Activated CD4-positive, alpha-beta T cell treated with anti-CD3 and anti-CD28 coated beads for 36 hours (primary cell): ENCODE measurements at regions of chr11 and their contacts with region 1.

Region 1: DNA sequence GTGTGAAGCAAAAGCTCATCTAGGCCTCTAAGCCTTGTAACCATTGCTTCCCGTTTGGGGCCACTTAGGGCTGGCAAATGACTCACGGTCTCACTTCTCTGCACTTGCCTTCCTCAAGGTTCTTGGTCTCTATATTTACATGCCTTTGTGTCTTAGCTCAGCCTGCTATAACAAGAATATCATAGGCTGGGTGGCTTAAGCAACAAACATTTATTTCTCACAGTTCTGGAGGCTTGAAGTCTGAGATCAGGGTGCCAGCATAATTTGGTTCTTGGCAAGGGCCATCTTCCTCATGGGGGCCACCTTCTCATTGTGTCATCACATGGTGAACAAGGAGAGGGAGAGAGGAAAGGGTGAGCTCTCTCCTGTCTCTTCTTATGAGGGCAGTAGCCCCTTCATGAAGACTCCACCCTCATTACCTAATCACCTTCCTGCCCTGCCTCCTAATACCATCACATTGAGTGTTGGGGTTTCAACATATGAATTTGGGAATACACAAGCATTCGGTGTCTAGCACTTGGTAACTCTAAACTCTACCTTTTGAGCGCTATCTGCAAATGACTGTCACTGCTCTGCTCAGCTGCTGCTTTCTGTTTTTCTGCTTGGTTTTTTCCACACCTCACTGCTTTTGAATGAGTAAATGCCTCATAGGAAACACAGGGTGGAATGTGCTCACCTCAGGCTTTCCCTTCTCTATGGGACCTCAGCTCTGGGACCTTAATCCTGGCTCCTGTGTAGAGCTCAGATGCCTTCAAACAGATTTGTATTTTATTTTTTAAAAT is 16.2 kb upstream of the ME3 start:
- DNase-seq: peak; percentile 69
- ATAC-seq: peak; percentile 87
- H3K4me3 Mint-ChIP-seq: peak overlapping the region; percentile 16
- H3K27ac Mint-ChIP-seq: peak overlapping the region; percentile 92
- H3K4me1 Mint-ChIP-seq: peaks cover 28% of the 10 kb centered on the region
- H3K27me3 Mint-ChIP-seq: peaks cover 7% of the 10 kb centered on the region

Region 2: DNA sequence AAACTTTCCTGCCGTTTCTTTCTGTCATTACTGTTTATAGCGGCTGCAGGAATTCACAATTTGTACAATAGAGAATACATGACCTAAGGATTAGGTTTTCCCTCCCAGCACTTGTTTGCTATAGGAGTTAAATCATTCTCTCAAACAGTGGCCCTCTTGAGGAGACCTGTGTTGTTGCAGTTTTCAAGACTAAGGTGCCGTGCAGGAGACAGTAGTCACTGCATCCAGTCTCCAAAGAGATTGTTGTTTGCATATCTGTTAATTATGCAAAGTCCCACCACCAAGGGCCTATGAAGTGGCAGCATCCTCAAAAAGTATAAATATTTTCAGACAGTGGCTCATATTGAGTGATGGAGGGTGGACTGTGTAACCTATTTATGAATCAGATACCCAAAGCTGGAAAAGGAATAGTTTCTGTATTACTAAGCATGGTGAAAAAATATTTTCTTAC is 114.0 kb after region 1 on chr11:
- CTCF ChIA-PET with region 1: interaction called, 3 read pairs
- POLR2A ChIA-PET with region 1: no interaction called
- intact Hi-C with region 1: loop called (anchors 1 to 5 kb)
- DNase-seq: peak; percentile 39
- ATAC-seq: peak; percentile 34
- H3K4me3 Mint-ChIP-seq: no peak overlapping the region
- H3K27ac Mint-ChIP-seq: no peak overlapping the region
- H3K4me1 Mint-ChIP-seq: peaks cover 62% of the 10 kb centered on the region
- H3K27me3 Mint-ChIP-seq: peaks cover 55% of the 10 kb centered on the region